Ovary (tissue), 10 donors: ENCODE measurements at regions of chr4 and their contacts with region 1.

Region 1: GRCh38 chr4:54322818-54323417 is 93.8 kb downstream of the PDGFRA start:
- DNase-seq: peak; percentile 49 to 71 (median 65)
- H3K4me3 ChIP-seq: no peak overlapping the region
- H3K27ac ChIP-seq: no peak overlapping the region
- H3K4me1 ChIP-seq: no peaks in the 10 kb centered on the region
- H3K27me3 ChIP-seq: no peaks in the 10 kb centered on the region
- CTCF ChIP-seq: peak; percentile 46 to 57 (median 54)
- EP300 ChIP-seq: no peak
- POLR2A ChIP-seq: no peak

Region 2: DNA sequence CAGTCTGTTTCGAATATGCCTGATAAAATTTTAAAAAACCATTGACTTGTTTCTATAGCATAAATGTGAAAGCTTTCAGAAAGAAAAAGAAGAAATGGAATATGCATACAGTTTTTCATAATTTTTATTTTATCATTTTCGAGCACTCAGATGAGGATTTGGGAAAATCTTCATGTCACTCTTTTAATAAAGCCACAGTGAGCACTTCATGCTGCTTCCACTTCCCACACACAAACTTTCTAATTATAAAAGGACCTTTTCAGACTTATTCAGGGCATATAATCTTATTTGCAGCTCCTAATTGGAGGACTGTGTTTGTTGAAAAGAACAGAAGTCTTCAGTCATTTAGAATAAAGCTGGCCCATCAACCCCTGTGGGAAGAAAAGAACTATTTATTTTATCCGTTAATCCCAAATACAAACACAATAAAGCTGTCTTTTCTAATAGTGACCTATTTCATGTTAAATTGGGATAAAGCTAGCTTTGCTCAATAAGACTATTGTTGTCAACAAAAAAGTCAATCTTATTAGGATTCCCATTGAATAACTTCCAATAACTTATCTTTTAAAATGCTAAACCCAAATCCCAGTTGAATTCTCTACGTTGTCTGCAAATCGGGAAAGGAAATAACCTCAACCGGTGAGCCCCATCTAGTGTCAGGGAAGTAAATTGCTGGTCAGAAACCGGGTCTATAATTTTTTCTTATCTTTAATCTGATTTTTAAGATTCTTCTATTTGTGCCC is 117.6 kb after region 1 on chr4:
- intact Hi-C with region 1: loop called in 2 of 4 experiments (anchors 5 to 10 kb)
- DNase-seq: peak in 1 of 5 donors; percentile 19
- H3K4me3 ChIP-seq: no peak overlapping the region
- H3K27ac ChIP-seq: no peak overlapping the region
- H3K4me1 ChIP-seq: no peaks in the 10 kb centered on the region
- H3K27me3 ChIP-seq: no peaks in the 10 kb centered on the region
- CTCF ChIP-seq: peak in 2 of 3 donors; percentile 42 to 54
- EP300 ChIP-seq: no peak
- POLR2A ChIP-seq: no peak

Region 3: DNA sequence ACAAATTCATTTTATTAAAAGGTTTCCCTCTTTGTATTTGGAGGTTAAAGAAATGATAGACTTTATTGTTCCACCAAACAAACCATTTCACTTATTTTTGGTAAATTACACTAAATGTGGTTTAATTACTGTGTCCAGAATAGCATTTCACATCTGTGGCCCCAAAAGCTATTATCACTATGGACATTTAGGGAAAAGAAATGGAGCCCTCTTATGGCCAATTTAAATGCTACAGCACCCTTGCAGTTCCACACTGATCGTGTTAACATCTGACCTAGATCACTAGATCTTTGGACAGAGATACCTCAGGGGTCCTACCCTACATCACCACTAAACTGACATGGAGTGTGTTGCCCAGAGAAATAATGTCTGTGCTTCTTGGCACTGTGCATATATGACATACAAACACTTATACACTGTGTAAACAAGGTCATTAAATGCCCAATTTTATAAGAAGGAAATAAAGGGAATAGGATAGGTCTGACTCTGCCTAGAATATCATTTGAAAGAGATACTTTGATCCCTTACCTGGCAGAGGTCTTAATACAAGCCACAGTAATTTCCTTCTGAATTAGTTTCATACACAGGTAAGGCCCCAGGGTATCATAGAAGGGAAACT is 638.5 kb after region 1 on chr4:
- intact Hi-C with region 1: loop called in 1 of 4 experiments (anchors 2 kb)
- DNase-seq: no peak
- H3K4me3 ChIP-seq: no peak overlapping the region
- H3K27ac ChIP-seq: no peak overlapping the region
- H3K4me1 ChIP-seq: no peaks in the 10 kb centered on the region
- H3K27me3 ChIP-seq: no peaks in the 10 kb centered on the region
- CTCF ChIP-seq: peak in 2 of 3 donors; percentile 33 to 39
- EP300 ChIP-seq: no peak
- POLR2A ChIP-seq: no peak